BJ (cell line): ENCODE measurements at regions of chr3 and their contacts with region 1.

Region 1: GRCh38 chr3:50245831-50246516 is 10.0 kb downstream of the GNAI2 start:
- DNase-seq: no peak
- H3K4me3 ChIP-seq: peak overlapping the region; percentile 34
- H3K27me3 ChIP-seq: no peaks in the 10 kb centered on the region
- CTCF ChIP-seq: peak; percentile 100

Region 2: GRCh38 chr3:50235716-50236496 is 10.1 kb before region 1 on chr3 and contains the start of gene GNAI2:
- CTCF ChIA-PET with region 1: interaction called, 114 read pairs
- POLR2A ChIA-PET with region 1: interaction called, 7 read pairs
- DNase-seq: peak; percentile 93
- H3K4me3 ChIP-seq: peak within 1 kb of the TSS; percentile 76
- H3K27me3 ChIP-seq: no peaks in the 10 kb centered on the region
- CTCF ChIP-seq: no peak
- polyA plus RNA-seq, gene GNAI2: 574 and 887 TPM in 2 replicates